Esophagus muscularis mucosa (tissue), 4 donors: ENCODE measurements at regions of chr1 and their contacts with region 1.

Region 1: GRCh38 chr1:235917267-235917811 is 50.6 kb upstream of the LYST start:
- DNase-seq: peak; percentile 94
- H3K4me3 ChIP-seq: no peak overlapping the region
- H3K27ac ChIP-seq: peak overlapping the region; percentile 60 to 75 (median 73)
- H3K4me1 ChIP-seq: peaks cover 21 to 39% (median 34%) of the 10 kb centered on the region in 4 donors
- H3K27me3 ChIP-seq: no peaks in the 10 kb centered on the region
- CTCF ChIP-seq: no peak
- EP300 ChIP-seq: no peak
- POLR2A ChIP-seq: no peak

Region 2: GRCh38 chr1:235866913-235867845 is 50.2 kb before region 1 on chr1:
- intact Hi-C with region 1: loop called (anchors 5 kb)
- DNase-seq: peak; percentile 98
- H3K4me3 ChIP-seq: peak overlapping the region; percentile 80 to 100 (median 90)
- H3K27ac ChIP-seq: peak overlapping the region; percentile 90 to 99 (median 96)
- H3K4me1 ChIP-seq: peaks cover 17 to 40% (median 36%) of the 10 kb centered on the region in 4 donors
- H3K27me3 ChIP-seq: no peaks in the 10 kb centered on the region
- CTCF ChIP-seq: no peak
- EP300 ChIP-seq: no peak
- POLR2A ChIP-seq: peak; percentile 64